CD4-positive, alpha-beta T cell (primary cell): ENCODE measurements at regions of chr1 and their contacts with region 1.

Region 1: GRCh38 chr1:173520799-173521198 is 43.7 kb downstream of the PRDX6 start:
- DNase-seq: no peak
- ATAC-seq: no peak
- H3K4me3 ChIP-seq: no peak overlapping the region
- H3K4me3 Mint-ChIP-seq: no peak overlapping the region
- H3K27ac ChIP-seq: no peak overlapping the region
- H3K27ac Mint-ChIP-seq: no peak overlapping the region
- H3K4me1 ChIP-seq: no peaks in the 10 kb centered on the region
- H3K4me1 Mint-ChIP-seq: peaks cover 12% of the 10 kb centered on the region
- H3K27me3 ChIP-seq: no peaks in the 10 kb centered on the region
- H3K27me3 Mint-ChIP-seq: peaks cover 4% of the 10 kb centered on the region
- CTCF ChIP-seq: no peak

Region 2: GRCh38 chr1:173484276-173484675 is 36.5 kb before region 1 on chr1:
- CTCF ChIA-PET with region 1: no interaction called
- POLR2A ChIA-PET with region 1: no interaction called
- intact Hi-C with region 1: loop called in 1 of 2 experiments (anchors 2 kb)
- DNase-seq: no peak
- ATAC-seq: no peak
- H3K4me3 ChIP-seq: no peak overlapping the region
- H3K4me3 Mint-ChIP-seq: no peak overlapping the region
- H3K27ac ChIP-seq: no peak overlapping the region
- H3K27ac Mint-ChIP-seq: no peak overlapping the region
- H3K4me1 ChIP-seq: no peaks in the 10 kb centered on the region
- H3K4me1 Mint-ChIP-seq: peaks cover 14% of the 10 kb centered on the region
- H3K27me3 ChIP-seq: no peaks in the 10 kb centered on the region
- H3K27me3 Mint-ChIP-seq: no peaks in the 10 kb centered on the region
- CTCF ChIP-seq: no peak

Region 3: DNA sequence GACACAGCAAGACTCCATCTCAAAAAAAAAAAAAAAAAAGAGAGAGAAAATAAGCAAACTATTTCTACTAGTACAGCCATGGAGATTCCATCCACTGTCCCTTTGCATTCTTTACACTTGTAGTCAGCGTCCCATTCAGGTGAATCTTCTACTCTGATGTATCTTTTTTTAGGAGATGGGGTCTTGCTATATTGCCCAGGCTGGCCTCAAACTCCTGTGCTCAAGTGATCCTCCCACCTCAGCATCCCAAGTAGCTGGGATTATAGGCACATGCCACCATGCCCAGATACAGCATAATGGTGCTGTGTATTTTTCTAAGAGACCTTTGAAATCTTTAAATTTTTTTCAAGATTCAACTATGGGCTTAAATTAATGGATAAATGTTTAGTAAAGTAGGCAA is 311.9 kb after region 1 on chr1:
- CTCF ChIA-PET with region 1: no interaction called
- POLR2A ChIA-PET with region 1: no interaction called
- intact Hi-C with region 1: no loop called
- DNase-seq: no peak
- ATAC-seq: no peak
- H3K4me3 ChIP-seq: no peak overlapping the region
- H3K4me3 Mint-ChIP-seq: no peak overlapping the region
- H3K27ac ChIP-seq: no peak overlapping the region
- H3K27ac Mint-ChIP-seq: no peak overlapping the region
- H3K4me1 ChIP-seq: no peaks in the 10 kb centered on the region
- H3K4me1 Mint-ChIP-seq: no peaks in the 10 kb centered on the region
- H3K27me3 ChIP-seq: no peaks in the 10 kb centered on the region
- H3K27me3 Mint-ChIP-seq: no peaks in the 10 kb centered on the region
- CTCF ChIP-seq: no peak